Left cardiac atrium (tissue), 4 donors: ENCODE measurements at regions of chr11 and their contacts with region 1.

Region 1: GRCh38 chr11:33857933-33858371 is 33.9 kb downstream of the LMO2 start:
- DNase-seq: peak; percentile 82
- ATAC-seq: peak; percentile 85 to 93

Region 2: DNA sequence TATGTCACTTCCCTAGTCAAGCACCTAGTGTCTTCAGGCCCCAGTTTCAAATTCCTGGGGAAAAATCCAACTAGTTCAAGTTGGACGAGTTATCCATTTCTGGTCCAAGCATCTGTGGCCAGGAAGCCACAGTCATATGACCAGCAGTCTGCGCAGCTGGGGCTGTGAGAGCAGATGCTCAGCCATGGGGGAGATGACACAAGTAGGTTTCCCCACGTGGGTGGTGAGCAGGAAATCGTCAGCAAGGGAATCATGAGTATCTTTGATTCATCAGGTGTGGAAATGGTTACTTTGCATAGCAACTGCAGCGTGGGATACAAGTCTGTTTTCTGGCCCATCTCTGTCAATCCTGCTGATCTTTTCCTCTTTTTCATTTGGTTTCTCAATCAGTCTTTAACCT is 342.6 kb before region 1 on chr11:
- intact Hi-C with region 1: no loop called
- DNase-seq: no peak
- ATAC-seq: no peak

Region 3: DNA sequence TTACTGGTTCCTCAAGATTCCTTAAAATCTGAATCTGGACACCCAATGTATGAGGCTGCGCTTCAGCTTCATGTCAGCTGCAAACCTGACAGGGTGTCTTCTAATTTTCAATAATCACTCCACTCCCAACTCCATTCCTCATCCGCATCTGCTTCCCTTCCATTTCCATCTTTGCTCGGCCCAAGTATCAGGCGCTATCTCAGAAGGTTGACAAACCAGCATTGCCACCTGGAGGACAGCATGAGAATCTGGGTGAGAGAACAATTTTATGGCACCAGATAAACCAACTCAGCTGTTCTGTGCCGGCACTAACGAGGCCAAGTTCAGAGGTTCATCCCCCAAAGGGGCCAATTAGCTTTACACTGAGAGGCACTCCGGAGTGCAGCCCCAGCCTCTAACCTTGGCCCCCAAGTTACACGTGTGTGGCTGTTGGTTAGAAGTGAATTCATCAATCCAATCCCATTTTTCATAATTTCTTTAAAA is 113.1 kb after region 1 on chr11:
- intact Hi-C with region 1: loop called (anchors 2 to 5 kb)
- DNase-seq: peak; percentile 41
- ATAC-seq: peak; percentile 82 to 84

Region 4: GRCh38 chr11:33987975-33988580 is 130.1 kb after region 1 on chr11:
- intact Hi-C with region 1: loop called in 1 of 2 experiments (anchors 5 kb)
- DNase-seq: peak; percentile 76
- ATAC-seq: peak; percentile 85 to 87

Region 5: DNA sequence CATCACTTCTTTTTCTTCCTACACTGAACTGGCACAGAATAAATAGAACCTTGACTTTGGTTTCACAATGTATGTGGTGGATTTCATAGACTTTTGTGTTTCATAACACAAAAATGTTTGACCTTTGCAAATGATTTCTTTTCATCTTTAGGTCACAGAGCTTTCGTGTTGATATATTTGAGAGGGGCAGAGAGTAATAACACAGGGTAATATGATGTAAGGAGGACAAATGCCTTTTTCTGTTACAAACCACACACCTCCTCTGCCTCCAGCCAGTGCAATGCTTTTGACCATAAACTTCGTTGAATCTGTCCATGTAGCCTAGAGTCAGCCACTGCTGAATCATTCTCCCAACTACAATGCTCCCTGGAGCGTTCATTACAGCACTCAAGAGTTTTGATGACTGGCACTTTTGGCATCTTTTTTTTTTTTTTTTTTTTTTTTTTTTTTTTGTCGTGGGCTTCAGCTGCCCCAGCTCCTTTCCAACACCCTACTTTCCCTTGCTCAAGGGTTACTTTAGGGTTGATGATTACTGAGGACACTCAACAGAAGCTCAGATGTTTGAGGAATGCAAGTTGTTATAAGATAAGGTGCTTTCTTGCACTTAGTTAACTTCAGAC is 569.3 kb after region 1 on chr11:
- intact Hi-C with region 1: no loop called
- DNase-seq: no peak
- ATAC-seq: peak; percentile 44 to 73